ENCODE measurements at regions of chr1 and their contacts with region 1.

Region 1: DNA sequence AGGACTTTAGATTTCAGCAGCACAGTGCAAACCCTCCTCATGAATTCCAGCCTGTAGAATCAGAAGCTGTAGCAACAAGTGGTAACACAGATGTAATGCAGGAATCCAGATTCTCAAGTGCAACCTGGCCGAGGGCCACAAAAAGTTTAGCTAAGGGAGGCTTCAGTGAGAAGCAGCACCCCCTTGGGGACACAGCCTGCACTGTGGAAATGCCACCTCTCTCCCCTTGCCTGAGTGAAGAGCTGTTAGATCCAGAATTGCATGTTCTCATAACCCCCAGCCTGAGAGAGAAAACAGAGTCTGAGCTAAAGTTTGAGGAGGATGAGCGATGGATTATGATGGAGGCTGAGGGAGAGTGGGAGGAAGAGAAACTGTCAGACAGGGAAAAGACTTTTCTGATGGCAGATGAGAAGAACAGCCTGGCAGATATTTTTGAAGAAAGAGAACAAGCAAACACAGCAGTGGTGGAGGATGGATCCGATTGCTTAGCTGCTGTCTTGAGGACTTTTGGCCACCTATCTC is 80.5 kb upstream of the BMP8A start:
- DNase-seq: peak; percentile 82
- H3K4me3 ChIP-seq: peak overlapping the region in 1 of 4 donors; percentile 73
- H3K27ac ChIP-seq: peak overlapping the region; percentile 80 to 97 (median 90)
- H3K4me1 ChIP-seq: peaks cover 22 to 66% (median 43%) of the 10 kb centered on the region in 4 donors
- H3K27me3 ChIP-seq: no peaks in the 10 kb centered on the region
- CTCF ChIP-seq: peak; percentile 59 to 81 (median 67)
- EP300 ChIP-seq: no peak
- POLR2A ChIP-seq: no peak

Region 2: DNA sequence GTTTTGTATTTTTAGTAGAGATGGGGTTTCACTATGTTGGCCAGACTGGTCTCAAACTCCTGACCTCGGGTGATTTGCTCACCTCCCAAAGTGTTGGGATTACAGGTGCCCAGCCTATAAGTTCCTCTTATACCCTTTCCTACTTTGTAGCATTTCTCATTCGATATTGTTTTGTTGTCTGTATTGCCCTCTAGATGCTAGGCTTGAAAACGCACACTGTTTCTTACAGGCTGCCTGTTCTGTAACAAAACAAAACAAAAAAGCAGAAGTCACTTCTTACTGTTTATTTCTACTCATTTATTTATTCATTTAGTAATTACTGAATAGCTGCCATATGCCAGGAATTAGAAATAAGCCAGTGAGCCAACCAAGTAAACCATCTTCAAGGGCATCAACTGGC is 56.4 kb before region 1 on chr1:
- in situ Hi-C with region 1: no loop called
- intact Hi-C with region 1: loop called (anchors 10 kb)
- DNase-seq: no peak
- H3K4me3 ChIP-seq: no peak overlapping the region
- H3K27ac ChIP-seq: no peak overlapping the region
- H3K4me1 ChIP-seq: peaks cover 0 to 6% (median 0%) of the 10 kb centered on the region in 4 donors
- H3K27me3 ChIP-seq: no peaks in the 10 kb centered on the region
- CTCF ChIP-seq: no peak
- EP300 ChIP-seq: no peak
- POLR2A ChIP-seq: no peak

Measured in transverse colon (tissue), 4 donors.